ENCODE measurements at regions of chr7 and their contacts with region 1.

Region 1: GRCh38 chr7:151448261-151449252 is 8.6 kb upstream of the CRYGN start:
- DNase-seq: peak; percentile 86
- ATAC-seq: peak; percentile 94
- H3K4me3 Mint-ChIP-seq: peak overlapping the region; percentile 59
- H3K27ac Mint-ChIP-seq: peak overlapping the region; percentile 64
- H3K4me1 Mint-ChIP-seq: peaks cover 13% of the 10 kb centered on the region
- H3K27me3 Mint-ChIP-seq: peaks cover 6% of the 10 kb centered on the region

Region 2: GRCh38 chr7:151315038-151315655 is 133.4 kb before region 1 on chr7:
- CTCF ChIA-PET with region 1: interaction called, 46 read pairs
- POLR2A ChIA-PET with region 1: no interaction called
- DNase-seq: peak; percentile 91
- ATAC-seq: peak; percentile 94
- H3K4me3 Mint-ChIP-seq: peak overlapping the region; percentile 40
- H3K27ac Mint-ChIP-seq: peak overlapping the region; percentile 79
- H3K4me1 Mint-ChIP-seq: peaks cover 16% of the 10 kb centered on the region
- H3K27me3 Mint-ChIP-seq: no peaks in the 10 kb centered on the region

Region 3: DNA sequence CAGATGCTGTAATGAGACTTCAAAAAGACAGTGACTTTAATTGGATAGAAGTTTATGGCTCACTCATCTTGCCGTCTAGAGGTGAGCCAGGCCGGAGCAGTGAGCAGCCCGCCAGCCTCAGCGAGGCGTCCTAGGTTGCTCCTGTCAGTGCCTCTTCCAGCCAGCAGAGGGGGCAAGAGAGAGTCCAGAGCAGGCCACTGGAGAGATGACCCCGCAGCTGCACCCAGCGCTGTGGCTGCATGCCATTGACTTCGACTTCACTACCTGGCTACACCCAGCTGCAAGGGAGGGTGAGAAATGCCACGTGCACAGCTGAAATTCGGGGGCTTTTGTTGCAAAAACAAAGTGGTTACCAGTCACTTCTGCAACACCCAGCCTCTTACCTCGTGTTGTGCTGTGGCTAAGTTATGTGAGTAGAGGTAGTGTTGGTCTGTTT is 80.4 kb before region 1 on chr7:
- CTCF ChIA-PET with region 1: interaction called, 193 read pairs
- POLR2A ChIA-PET with region 1: interaction called, 9 read pairs
- DNase-seq: peak; percentile 84
- ATAC-seq: peak; percentile 99
- H3K4me3 Mint-ChIP-seq: no peak overlapping the region
- H3K27ac Mint-ChIP-seq: no peak overlapping the region
- H3K4me1 Mint-ChIP-seq: peaks cover 17% of the 10 kb centered on the region
- H3K27me3 Mint-ChIP-seq: no peaks in the 10 kb centered on the region

Region 4: DNA sequence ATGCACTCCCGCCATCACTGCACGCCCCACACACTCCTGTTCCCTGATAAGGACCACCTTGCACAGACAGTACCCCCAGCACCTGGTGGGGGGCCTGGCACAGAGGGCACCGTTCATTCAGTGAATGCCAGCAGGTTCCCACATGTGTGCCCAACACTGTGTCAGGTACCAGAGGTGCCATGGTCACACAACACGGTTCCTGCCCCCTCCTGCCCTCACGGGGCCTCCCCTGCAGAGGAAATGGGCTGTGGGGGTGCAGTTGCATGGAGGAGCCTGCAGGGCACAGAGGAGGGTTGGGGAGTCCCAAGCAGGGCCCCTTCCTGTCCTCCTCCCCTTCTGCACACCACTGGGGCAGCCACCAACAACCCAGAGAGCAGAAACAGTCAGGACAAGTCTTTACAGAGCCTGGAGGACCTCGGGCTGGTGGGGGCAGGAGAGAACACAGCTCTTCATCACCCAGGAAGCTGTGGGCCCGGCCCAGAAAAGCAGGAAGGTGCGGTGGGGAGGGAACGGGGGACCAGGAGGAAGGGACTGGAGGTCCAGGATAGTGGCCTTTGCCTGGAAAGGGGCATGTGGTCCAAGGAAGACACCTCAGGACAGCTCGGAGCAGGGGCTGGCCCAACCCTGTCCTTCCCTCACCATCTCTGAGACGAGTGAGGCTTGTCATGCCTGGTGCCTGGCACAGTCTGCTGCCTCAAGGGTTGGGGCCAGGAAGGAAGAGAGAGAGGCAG is 15.6 kb before region 1 on chr7:
- CTCF ChIA-PET with region 1: interaction called, 29 read pairs
- POLR2A ChIA-PET with region 1: interaction called, 5 read pairs
- DNase-seq: peak; percentile 83
- ATAC-seq: peak; percentile 77
- H3K4me3 Mint-ChIP-seq: peak overlapping the region; percentile 56
- H3K27ac Mint-ChIP-seq: peak overlapping the region; percentile 87
- H3K4me1 Mint-ChIP-seq: peaks cover 52% of the 10 kb centered on the region
- H3K27me3 Mint-ChIP-seq: no peaks in the 10 kb centered on the region

Region 5: GRCh38 chr7:151472644-151473380 is 24.3 kb after region 1 on chr7:
- CTCF ChIA-PET with region 1: interaction called, 11 read pairs
- POLR2A ChIA-PET with region 1: no interaction called
- DNase-seq: no peak
- ATAC-seq: no peak
- H3K4me3 Mint-ChIP-seq: no peak overlapping the region
- H3K27ac Mint-ChIP-seq: peak overlapping the region; percentile 59
- H3K4me1 Mint-ChIP-seq: peaks cover 52% of the 10 kb centered on the region
- H3K27me3 Mint-ChIP-seq: no peaks in the 10 kb centered on the region

Region 6: DNA sequence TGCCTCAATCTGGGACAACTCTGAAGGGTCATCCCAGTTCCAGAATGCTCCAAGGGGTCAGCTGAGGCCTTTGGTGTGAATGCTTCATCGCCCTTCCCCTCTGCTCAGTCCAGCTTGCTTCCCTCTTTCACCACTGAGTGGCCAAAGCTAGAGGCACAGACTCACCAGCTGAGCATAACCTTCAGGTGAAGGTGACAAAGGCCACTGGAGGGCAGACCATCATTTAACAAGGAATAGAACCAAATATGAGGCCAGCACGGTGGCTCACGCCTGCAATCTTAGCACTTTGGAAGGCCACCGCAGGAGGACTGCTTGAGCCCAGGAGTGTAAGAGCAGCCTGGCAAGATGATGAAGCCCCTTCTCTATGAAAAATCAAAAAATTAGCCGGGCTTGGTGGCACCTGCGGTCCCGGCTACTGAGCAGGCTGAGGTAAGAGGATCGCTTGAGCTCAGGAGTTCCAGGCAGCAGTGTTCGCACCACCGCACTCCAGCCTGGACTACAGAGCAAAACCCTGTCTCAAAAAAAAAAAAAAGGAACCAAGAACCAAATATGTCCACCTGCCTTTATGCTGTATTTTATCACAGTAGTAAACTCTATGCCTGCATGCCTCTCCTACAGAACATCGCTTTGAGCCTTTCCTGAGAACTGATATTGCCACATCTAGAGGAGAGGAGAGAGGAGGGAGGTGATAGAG is 415.0 kb after region 1 on chr7:
- CTCF ChIA-PET with region 1: no interaction called
- POLR2A ChIA-PET with region 1: no interaction called
- DNase-seq: no peak
- ATAC-seq: no peak
- H3K4me3 Mint-ChIP-seq: no peak overlapping the region
- H3K27ac Mint-ChIP-seq: no peak overlapping the region
- H3K4me1 Mint-ChIP-seq: no peaks in the 10 kb centered on the region
- H3K27me3 Mint-ChIP-seq: no peaks in the 10 kb centered on the region

Measured in activated CD8-positive, alpha-beta T cell treated with anti-CD3 and anti-CD28 coated beads, Interleukin-2, amount 10 ng/mL, durations not matched to agents 7 days and 5 days (primary cell).